GM12878 (cell line): ENCODE measurements at regions of chr6 and their contacts with region 1.

Region 1: DNA sequence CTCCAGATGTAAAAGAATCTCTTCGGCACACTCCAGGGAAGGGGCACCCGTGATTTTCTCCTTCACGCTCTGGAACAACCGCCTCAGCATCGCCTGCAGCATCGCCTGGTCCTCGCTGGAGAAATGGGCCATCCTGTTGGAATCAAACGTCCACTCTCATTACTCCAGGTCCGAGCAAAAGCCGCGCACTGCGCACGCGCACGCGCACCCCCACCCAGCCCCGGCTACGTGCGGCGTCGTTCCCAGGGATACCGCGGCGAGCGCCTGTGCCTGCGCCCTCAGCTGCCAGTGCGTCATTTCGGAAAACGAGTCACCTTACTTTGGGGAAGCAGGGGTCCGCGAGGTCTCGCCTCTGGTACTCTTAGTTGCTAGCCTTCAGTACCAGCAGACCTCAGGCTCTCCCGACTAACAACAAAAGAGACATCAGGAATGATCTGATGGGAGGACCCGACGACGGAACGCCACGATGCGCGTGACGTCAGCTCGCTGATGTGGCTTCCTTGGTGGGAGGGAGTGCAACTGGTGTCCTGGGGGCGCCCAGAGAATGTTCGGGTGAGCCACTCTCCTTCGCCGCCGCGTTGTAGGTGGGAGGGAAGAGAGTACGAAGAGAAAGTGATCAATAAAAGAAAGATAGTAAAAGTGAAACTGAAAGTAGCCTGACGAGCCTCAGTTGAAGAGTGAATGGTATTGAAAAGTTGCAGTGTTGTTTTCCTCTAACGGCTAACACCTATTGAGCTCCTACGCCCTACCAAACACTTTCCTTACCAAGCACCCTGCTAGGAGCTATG is at the start of gene TBC1D32:
- DNase-seq: peak; percentile 73
- ATAC-seq: peak; percentile 96
- H3K4me3 ChIP-seq: peak within 1 kb of the TSS; percentile 83
- H3K27ac ChIP-seq: peak within 1 kb of the TSS; percentile 93
- H3K4me1 ChIP-seq: no peaks in the 10 kb centered on the region
- H3K27me3 ChIP-seq: no peaks in the 10 kb centered on the region
- CTCF ChIP-seq: no peak
- EP300 ChIP-seq: no peak
- POLR2A ChIP-seq: peak; percentile 87
- RAD21 ChIP-seq: no peak
- polyA plus RNA-seq, gene TBC1D32: 2.2 TPM

Region 2: DNA sequence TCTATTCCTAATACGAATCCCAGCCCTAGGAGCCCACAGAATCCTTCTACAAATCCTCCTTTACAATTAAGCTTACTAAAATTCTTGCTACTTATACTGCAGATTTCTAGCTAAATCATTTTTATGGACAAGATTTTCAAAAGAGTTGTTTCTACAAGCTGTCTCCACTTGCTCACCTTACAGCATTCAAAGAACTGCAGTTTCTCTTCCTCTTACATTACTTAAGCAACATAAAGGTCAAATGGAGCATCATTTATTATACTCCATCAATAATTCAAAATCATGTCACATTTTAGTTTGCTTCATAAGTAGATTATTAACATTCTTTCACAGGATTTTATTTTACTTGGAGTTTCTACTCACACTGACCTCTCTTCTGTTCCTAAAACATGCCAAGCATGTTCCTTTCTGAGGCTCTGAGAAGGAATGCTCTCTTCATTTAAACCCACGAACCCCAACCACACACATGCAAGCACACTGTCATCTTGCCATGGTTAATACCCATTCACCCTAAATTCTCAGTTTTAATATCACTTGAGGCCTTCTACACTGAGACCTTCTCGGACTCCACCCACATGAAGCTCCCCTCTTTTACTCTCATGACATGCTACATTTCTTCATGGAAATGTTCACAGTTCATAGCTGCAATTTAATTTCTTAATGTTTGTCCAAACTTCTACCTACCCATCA is 388.4 kb before region 1 on chr6:
- CTCF ChIA-PET with region 1: no interaction called
- POLR2A ChIA-PET with region 1: no interaction called
- RAD21 ChIA-PET with region 1: no interaction called
- SMC1A ChIA-PET with region 1: no interaction called
- in situ Hi-C with region 1: no loop called
- intact Hi-C with region 1: loop called (anchors 10 kb)
- DNase-seq: no peak
- ATAC-seq: peak; percentile 71
- H3K4me3 ChIP-seq: no peak overlapping the region
- H3K27ac ChIP-seq: no peak overlapping the region
- H3K4me1 ChIP-seq: no peaks in the 10 kb centered on the region
- H3K27me3 ChIP-seq: no peaks in the 10 kb centered on the region
- CTCF ChIP-seq: no peak
- EP300 ChIP-seq: no peak
- POLR2A ChIP-seq: no peak
- RAD21 ChIP-seq: no peak

Region 3: GRCh38 chr6:121319112-121319553 is 15.4 kb before region 1 on chr6:
- CTCF ChIA-PET with region 1: interaction called, 32 read pairs
- POLR2A ChIA-PET with region 1: interaction called, 7 read pairs
- RAD21 ChIA-PET with region 1: interaction called, 6 read pairs
- SMC1A ChIA-PET with region 1: interaction called, 11 read pairs
- in situ Hi-C with region 1: no loop called
- intact Hi-C with region 1: no loop called
- DNase-seq: no peak
- ATAC-seq: peak; percentile 84
- H3K4me3 ChIP-seq: no peak overlapping the region
- H3K27ac ChIP-seq: no peak overlapping the region
- H3K4me1 ChIP-seq: no peaks in the 10 kb centered on the region
- H3K27me3 ChIP-seq: no peaks in the 10 kb centered on the region
- CTCF ChIP-seq: peak; percentile 25 to 41 (median 37); a peak in 2 of 6 replicates
- EP300 ChIP-seq: no peak
- POLR2A ChIP-seq: no peak
- RAD21 ChIP-seq: no peak